ENCODE measurements at regions of chr4 and their contacts with region 1.

Region 1: GRCh38 chr4:38160487-38161207 is 200.4 kb downstream of the PTTG2 start:
- DNase-seq: peak; percentile 69
- ATAC-seq: peak; percentile 91
- H3K4me3 ChIP-seq: no peak overlapping the region
- H3K27ac ChIP-seq: peak overlapping the region; percentile 57
- H3K4me1 ChIP-seq: peaks cover 10% of the 10 kb centered on the region
- H3K27me3 ChIP-seq: no peaks in the 10 kb centered on the region
- CTCF ChIP-seq: no peak
- EP300 ChIP-seq: peak; percentile 87 to 96; a peak in 3 of 4 replicates
- POLR2A ChIP-seq: no peak
- RAD21 ChIP-seq: peak; percentile 16; the same call in 1 of the 2 replicates

Region 2: DNA sequence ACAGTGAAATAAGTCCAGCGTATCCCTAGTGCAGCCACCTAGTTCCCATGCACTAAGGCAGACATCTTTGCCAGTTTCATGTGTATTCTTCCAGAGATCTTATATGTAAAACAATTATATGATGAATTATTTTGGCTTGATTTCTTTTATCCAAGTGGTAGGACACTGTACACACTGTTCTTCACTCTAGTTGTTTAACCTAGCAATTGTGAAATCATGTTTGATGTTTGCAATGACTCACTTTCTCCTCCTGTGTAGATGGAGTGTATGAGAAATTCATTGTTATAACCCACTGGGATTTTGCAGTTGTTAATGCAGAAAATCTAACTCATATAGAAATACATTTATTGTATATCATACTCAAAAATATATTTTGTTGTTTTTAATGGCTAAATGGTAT is 287.3 kb before region 1 on chr4:
- CTCF ChIA-PET with region 1: no interaction called
- POLR2A ChIA-PET with region 1: no interaction called
- RAD21 ChIA-PET with region 1: no interaction called
- SMC1A ChIA-PET with region 1: no interaction called
- in situ Hi-C with region 1: no loop called
- intact Hi-C with region 1: no loop called
- DNase-seq: no peak
- ATAC-seq: no peak
- H3K4me3 ChIP-seq: no peak overlapping the region
- H3K27ac ChIP-seq: no peak overlapping the region
- H3K4me1 ChIP-seq: no peaks in the 10 kb centered on the region; the same call in 1 of the 2 replicates
- H3K27me3 ChIP-seq: no peaks in the 10 kb centered on the region
- CTCF ChIP-seq: no peak
- EP300 ChIP-seq: no peak
- POLR2A ChIP-seq: no peak
- RAD21 ChIP-seq: no peak

Region 3: GRCh38 chr4:38013461-38014366 is 146.9 kb before region 1 on chr4:
- CTCF ChIA-PET with region 1: no interaction called
- POLR2A ChIA-PET with region 1: no interaction called
- RAD21 ChIA-PET with region 1: no interaction called
- SMC1A ChIA-PET with region 1: no interaction called
- in situ Hi-C with region 1: no loop called
- intact Hi-C with region 1: no loop called
- DNase-seq: no peak
- ATAC-seq: no peak
- H3K4me3 ChIP-seq: no peak overlapping the region
- H3K27ac ChIP-seq: no peak overlapping the region
- H3K4me1 ChIP-seq: no peaks in the 10 kb centered on the region
- H3K27me3 ChIP-seq: no peaks in the 10 kb centered on the region
- CTCF ChIP-seq: no peak
- EP300 ChIP-seq: no peak
- POLR2A ChIP-seq: no peak
- RAD21 ChIP-seq: no peak

Region 4: DNA sequence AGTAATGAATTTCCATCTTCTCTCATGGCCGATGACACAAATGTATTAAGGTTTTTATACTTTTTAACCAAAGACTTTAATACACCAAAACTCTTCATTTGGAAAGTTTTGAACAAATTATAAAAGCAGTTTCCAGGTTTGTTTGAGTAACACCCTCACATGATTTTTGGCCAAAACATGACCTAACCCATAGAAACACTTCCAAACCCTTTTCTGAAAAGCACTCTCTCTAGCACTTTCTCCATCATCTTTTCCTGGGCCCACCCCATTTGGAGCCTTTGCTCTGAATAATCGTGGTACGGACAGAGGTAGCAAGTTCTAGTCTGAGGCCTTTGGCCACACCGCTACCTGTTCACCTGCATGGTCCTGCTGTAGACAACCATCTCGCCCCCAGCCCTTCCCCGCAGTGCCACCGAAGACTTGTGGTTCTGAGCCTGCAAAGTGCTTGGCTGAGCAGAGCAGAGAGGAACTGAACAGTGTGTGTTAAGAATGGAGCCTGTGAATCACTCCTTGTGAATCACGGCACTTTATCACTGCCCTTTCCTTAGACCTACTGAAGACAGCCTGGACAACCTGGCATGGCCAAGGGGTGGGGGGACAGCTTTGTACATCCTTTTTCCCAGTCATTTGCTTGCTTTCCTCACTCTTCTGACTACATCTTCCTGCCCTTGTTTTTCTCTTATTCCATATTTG is 18.7 kb before region 1 on chr4:
- CTCF ChIA-PET with region 1: interaction called, 4 read pairs
- POLR2A ChIA-PET with region 1: interaction called, 5 read pairs
- RAD21 ChIA-PET with region 1: interaction called, 6 read pairs
- SMC1A ChIA-PET with region 1: interaction called, 14 read pairs
- in situ Hi-C with region 1: no loop called
- intact Hi-C with region 1: no loop called
- DNase-seq: no peak
- ATAC-seq: no peak
- H3K4me3 ChIP-seq: no peak overlapping the region
- H3K27ac ChIP-seq: no peak overlapping the region
- H3K4me1 ChIP-seq: peaks cover 10% of the 10 kb centered on the region
- H3K27me3 ChIP-seq: no peaks in the 10 kb centered on the region
- CTCF ChIP-seq: no peak
- EP300 ChIP-seq: no peak
- POLR2A ChIP-seq: no peak
- RAD21 ChIP-seq: no peak

Measured in GM12878 (cell line).